ENCODE measurements at regions of chr19 and their contacts with region 1.

Region 1: DNA sequence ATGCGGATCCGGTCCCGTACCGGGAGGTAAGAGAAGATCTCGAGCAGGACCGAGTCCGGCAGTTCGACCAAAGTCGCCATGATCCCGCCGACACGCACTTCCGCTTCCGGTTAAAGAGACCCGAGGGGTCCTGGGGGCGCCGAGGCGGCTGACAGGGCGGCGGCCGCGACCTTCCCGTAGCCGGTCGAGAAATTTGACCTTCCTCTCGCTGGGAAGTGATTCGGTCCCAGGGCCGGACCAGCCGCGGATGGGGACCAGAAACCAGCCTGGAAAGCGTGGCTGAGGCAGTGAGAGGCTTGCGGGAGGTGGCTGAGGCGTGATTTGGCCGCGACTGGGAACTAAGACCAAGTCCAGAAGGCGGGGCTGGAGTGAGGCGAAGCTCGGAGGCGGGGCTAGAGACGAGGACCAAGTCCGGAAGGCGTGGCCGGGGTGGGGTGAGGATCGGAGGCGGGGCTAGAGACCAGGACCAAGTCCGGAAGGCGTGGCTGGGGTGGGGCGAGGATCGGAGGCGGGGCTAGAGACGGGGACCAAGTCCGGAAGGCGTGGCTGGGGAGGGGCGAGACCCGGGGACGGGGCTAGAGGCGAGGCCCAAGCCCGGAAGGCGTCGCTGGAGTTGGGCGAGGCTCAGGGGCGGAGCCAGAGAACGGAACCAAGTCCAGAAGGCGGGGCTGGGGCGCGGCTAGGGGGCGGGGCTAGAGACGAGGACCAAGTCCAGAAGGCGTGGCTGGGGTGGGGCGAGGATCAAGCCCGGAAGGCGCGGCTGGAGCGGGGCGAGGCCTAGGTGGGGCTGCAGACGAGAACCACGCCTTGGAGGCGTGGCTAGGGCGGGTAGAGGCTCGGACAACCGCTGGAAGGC is at the start of gene FBXL12:
- DNase-seq: peak; percentile 100
- ATAC-seq: peak; percentile 89
- H3K4me3 ChIP-seq: peak within 1 kb of the TSS; percentile 97 to 100
- H3K4me3 Mint-ChIP-seq: peak within 1 kb of the TSS; percentile 88
- H3K27ac ChIP-seq: peak within 1 kb of the TSS; percentile 98 to 99
- H3K27ac Mint-ChIP-seq: peak within 1 kb of the TSS; percentile 93
- H3K4me1 ChIP-seq: peaks cover 18% of the 10 kb centered on the region
- H3K4me1 Mint-ChIP-seq: peaks cover 38% of the 10 kb centered on the region
- H3K27me3 ChIP-seq: no peaks in the 10 kb centered on the region
- H3K27me3 Mint-ChIP-seq: no peaks in the 10 kb centered on the region
- CTCF ChIP-seq: no peak
- total RNA-seq, gene FBXL12: 38.9 to 41.3 TPM

Region 2: DNA sequence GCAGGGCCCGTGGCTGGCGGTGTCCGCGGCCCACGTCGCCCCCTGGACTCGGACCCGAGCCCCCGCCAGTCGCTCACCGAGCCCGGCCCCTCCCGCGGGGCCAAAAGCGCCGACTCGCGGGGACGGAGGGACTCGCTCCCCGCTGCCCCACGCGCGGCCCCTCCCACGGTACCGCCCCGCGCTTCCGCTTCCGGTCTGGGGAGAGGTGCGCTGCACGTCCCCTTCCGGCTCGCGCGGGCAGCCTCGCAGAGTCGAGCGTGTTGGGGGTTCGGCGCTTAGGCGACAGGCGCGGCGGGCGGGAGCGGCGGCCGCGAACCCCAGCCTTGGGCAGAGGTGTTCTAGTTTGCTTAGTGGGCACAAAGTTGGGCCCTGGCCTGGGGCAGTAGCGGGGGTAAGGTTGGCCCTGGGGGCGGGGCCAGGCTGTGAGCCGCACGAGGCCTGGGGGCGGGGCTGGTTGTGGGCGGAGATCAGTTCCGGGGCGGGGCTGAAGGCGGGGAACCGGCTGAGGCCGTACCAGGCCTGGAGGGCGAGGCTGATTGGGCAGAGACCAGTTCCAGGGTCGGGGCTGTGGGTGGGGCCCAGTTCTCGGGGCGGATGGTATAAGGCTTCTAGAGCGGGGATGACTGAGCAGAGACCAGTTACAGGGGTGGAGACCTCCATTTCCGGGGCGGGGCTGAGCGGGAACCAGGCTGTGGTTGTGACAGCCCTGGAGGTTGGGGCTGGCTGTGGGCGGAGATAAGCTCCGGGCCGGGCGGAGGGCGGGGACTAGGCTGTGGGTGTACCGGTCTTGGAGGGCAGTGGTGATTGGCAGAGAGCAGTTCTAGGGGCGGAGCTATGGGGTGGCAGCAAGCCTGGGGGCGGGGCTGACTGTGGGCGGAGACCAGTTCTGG is 986.6 kb before region 1 on chr19 and contains the starts of genes MBD3L1 and ZNF558:
- CTCF ChIA-PET with region 1: no interaction called
- POLR2A ChIA-PET with region 1: no interaction called
- intact Hi-C with region 1: loop called in 1 of 2 experiments (anchors 2 kb)
- DNase-seq: peak; percentile 97 to 100 (median 99)
- ATAC-seq: peak; percentile 89
- H3K4me3 ChIP-seq: peak within 1 kb of the TSS; percentile 86 to 93
- H3K4me3 Mint-ChIP-seq: peak within 1 kb of the TSS; percentile 92
- H3K27ac ChIP-seq: peak within 1 kb of the TSS; percentile 91
- H3K27ac Mint-ChIP-seq: peak within 1 kb of the TSS; percentile 96
- H3K4me1 ChIP-seq: peaks cover 13% of the 10 kb centered on the region
- H3K4me1 Mint-ChIP-seq: peaks cover 27% of the 10 kb centered on the region
- H3K27me3 ChIP-seq: no peaks in the 10 kb centered on the region
- H3K27me3 Mint-ChIP-seq: no peaks in the 10 kb centered on the region
- CTCF ChIP-seq: no peak
- total RNA-seq, gene MBD3L1: not detected
- total RNA-seq, gene ZNF558: 28.1 to 32.9 TPM

Region 3: DNA sequence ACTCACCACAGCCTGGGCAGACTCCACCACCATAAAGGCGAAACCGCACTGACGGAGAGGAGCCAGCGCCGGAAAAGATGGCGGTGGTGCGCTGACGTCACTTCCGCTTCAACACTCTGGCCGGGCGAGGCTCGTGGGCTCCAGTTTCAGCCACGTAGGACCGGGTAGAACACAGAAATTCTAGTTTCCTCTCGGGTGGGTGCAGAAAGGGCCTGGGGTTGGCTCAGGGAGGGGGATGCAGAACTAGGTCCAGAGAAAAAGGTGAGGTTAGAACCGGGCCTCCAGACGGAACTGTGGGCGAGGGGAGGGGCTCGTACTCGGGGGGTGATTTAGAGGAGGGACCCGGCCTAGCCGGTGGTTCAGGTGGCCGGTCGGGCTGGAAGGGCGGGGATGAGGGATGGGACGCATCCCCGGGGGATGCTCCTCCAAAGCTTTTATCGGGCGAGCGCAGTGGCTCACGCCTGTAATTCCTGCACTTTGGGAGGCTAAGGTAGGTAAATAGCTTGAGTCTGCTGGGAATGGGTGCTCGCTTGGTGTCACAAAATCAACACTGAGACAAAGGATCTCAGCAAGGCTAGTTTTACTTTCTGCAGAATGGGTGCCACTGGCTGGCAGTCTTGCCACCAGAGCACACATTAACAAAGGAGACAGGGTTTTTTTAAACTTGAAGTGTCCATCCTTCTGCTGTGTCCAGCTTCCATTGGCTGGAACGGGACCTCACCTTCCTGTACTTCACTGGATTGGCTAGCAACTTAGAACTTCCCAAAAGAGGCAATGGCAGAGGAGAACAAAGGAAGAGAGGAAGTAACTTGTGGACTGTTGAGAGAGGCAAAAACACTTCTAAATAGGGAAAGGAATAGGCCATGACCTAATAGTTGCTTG is 197.6 kb before region 1 on chr19 and contains the start of gene ZNF561:
- CTCF ChIA-PET with region 1: no interaction called
- POLR2A ChIA-PET with region 1: interaction called, 6 read pairs
- intact Hi-C with region 1: loop called in 1 of 2 experiments (anchors 1 kb)
- DNase-seq: peak; percentile 77 to 97 (median 91)
- ATAC-seq: peak; percentile 85
- H3K4me3 ChIP-seq: peak within 1 kb of the TSS; percentile 81 to 97
- H3K4me3 Mint-ChIP-seq: peak within 1 kb of the TSS; percentile 95
- H3K27ac ChIP-seq: peak within 1 kb of the TSS; percentile 91 to 94
- H3K27ac Mint-ChIP-seq: peak within 1 kb of the TSS; percentile 99
- H3K4me1 ChIP-seq: peaks cover 15% of the 10 kb centered on the region
- H3K4me1 Mint-ChIP-seq: peaks cover 27% of the 10 kb centered on the region
- H3K27me3 ChIP-seq: no peaks in the 10 kb centered on the region
- H3K27me3 Mint-ChIP-seq: no peaks in the 10 kb centered on the region
- CTCF ChIP-seq: no peak
- total RNA-seq, gene ZNF561: 35.5 to 39.8 TPM

Region 4: DNA sequence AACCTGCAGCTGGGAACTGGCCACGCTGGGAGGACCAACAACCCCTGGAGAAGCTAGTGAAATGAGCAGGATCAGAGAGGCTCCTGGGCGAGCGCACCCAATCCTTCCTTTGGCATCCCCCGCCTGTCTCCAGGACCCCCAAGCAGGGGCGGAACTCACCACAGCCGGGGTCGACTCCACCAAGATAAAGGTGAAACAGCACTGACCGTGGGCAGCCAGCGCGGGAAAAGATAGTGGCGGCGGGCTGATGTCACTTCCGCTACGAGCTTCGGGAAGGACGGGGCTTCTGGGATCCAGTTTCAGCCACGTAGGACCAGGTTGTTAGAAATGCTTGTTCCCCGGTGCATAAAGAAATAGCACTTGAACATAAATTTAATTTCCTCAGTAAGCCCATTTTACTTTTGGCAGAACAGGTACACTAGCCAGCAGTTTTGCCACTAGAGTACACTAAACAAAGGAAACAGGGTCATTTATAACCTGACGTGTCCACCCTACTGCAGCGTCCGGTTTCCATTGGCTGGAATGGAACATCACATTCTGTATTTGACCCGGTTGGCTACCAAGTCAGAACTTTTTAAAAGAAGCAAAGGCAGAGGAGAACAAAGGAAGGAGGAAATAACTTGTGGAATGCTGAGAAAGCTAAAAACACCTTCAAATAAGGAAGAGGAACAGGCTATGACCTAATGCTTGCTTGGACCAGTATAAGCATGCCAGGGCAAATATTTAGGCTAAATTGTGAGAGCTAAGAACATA is 118.6 kb before region 1 on chr19:
- CTCF ChIA-PET with region 1: no interaction called
- POLR2A ChIA-PET with region 1: no interaction called
- intact Hi-C with region 1: no loop called
- DNase-seq: no peak
- ATAC-seq: no peak
- H3K4me3 ChIP-seq: no peak overlapping the region
- H3K4me3 Mint-ChIP-seq: no peak overlapping the region
- H3K27ac ChIP-seq: no peak overlapping the region
- H3K27ac Mint-ChIP-seq: no peak overlapping the region
- H3K4me1 ChIP-seq: no peaks in the 10 kb centered on the region
- H3K4me1 Mint-ChIP-seq: peaks cover 3% of the 10 kb centered on the region
- H3K27me3 ChIP-seq: no peaks in the 10 kb centered on the region
- H3K27me3 Mint-ChIP-seq: peaks cover 2% of the 10 kb centered on the region
- CTCF ChIP-seq: no peak

Region 5: DNA sequence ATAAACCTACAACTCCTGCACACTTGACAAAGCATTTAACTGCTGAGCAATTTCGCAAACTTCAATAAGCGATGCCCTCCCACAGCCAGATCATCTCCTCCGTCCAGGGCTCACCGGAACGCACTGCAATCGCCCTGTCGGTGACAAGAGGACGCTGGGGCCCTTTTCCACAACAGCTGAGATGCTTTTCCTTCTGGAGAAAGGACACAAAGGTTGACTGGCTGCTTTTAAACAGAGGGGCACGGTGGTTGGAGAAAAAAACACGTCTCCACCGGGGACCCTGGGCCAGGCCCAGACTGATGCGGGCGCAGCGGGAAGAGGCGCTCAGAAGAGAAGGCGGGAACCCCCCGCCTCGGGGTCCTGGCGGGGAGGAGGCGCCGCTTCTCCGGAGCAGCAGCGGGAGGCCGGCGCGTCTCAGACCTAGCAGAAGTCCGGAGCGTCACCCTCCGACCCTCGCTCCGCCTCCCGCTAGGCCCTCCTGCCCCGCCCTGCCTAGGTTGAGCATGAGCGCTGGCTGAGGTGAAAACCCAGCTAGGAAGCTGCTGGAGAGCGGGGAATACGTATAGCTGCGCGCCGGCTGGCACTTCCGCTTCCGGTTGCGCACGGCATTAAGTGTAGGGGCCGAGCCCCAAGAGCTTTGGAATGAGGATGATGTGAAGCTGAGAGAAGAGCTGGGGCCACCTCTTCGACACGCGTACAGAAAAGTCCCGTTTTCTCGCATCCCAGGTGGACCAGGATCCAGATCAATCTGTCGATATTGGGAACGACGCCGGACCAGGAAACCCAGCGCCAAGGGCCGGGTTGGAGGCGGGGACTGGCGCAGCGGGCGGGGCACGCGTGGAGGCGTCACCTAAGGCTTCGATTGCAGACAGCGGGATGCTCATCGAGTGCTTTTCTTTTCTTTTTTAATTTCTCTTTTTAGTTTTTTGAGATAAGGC is 50.5 kb before region 1 on chr19 and contains the start of gene ZNF846:
- CTCF ChIA-PET with region 1: no interaction called
- POLR2A ChIA-PET with region 1: interaction called, 4 read pairs
- intact Hi-C with region 1: loop called (anchors 1 kb)
- DNase-seq: peak; percentile 83 to 96 (median 93)
- ATAC-seq: peak; percentile 95
- H3K4me3 ChIP-seq: peak within 1 kb of the TSS; percentile 94 to 96
- H3K4me3 Mint-ChIP-seq: peak within 1 kb of the TSS; percentile 97
- H3K27ac ChIP-seq: peak within 1 kb of the TSS; percentile 87 to 99
- H3K27ac Mint-ChIP-seq: peak within 1 kb of the TSS; percentile 99
- H3K4me1 ChIP-seq: peaks cover 8% of the 10 kb centered on the region
- H3K4me1 Mint-ChIP-seq: peaks cover 16% of the 10 kb centered on the region
- H3K27me3 ChIP-seq: no peaks in the 10 kb centered on the region
- H3K27me3 Mint-ChIP-seq: no peaks in the 10 kb centered on the region
- CTCF ChIP-seq: no peak
- total RNA-seq, gene ZNF846: 6.4 to 8.2 TPM

Region 6: GRCh38 chr19:9834726-9835506 is 16.0 kb after region 1 on chr19 and contains the start of gene PIN1:
- CTCF ChIA-PET with region 1: interaction called, 5 read pairs
- POLR2A ChIA-PET with region 1: interaction called, 4 read pairs
- intact Hi-C with region 1: loop called (anchors 1 kb)
- DNase-seq: peak; percentile 98 to 100 (median 99)
- ATAC-seq: peak; percentile 95
- H3K4me3 ChIP-seq: peak within 1 kb of the TSS; percentile 71 to 94
- H3K4me3 Mint-ChIP-seq: peak within 1 kb of the TSS; percentile 90
- H3K27ac ChIP-seq: peak within 1 kb of the TSS; percentile 78 to 80
- H3K27ac Mint-ChIP-seq: peak within 1 kb of the TSS; percentile 94
- H3K4me1 ChIP-seq: peaks cover 15% of the 10 kb centered on the region
- H3K4me1 Mint-ChIP-seq: peaks cover 22% of the 10 kb centered on the region
- H3K27me3 ChIP-seq: no peaks in the 10 kb centered on the region
- H3K27me3 Mint-ChIP-seq: no peaks in the 10 kb centered on the region
- CTCF ChIP-seq: no peak
- total RNA-seq, gene PIN1: 42.4 to 42.7 TPM